ENCODE measurements at regions of chr16 and their contacts with region 1.

Region 1: DNA sequence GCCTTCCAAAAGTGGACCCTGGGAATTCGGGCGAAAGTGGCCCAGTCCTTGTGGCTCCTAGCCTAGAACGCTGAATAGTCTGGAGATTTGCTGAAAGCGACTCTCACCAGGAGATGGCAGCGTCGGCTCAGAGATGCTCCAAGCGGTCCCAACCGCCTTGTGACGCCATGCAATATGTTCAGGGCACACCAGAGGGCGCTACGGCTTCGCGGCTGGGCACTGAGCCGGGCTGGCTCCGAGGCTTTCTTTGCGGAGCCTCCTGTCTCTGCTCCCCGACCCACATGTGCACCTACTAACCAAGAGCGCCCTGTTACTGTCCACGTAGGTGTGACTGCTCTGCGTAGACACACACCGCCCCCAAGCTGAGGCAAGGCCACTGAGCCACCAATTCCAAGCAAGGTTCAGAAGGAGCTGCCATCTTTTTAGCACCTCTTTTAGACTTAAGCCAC is 36.9 kb downstream of the SYCE1L start:
- DNase-seq: peak; percentile 71
- ATAC-seq: peak; percentile 99
- H3K4me3 ChIP-seq: no peak overlapping the region
- H3K27ac ChIP-seq: no peak overlapping the region
- H3K4me1 ChIP-seq: no peaks in the 10 kb centered on the region
- H3K27me3 ChIP-seq: peaks cover 2% of the 10 kb centered on the region; the same call in 1 of the 2 replicates
- CTCF ChIP-seq: peak; percentile 100; the same call in 1 of the 2 replicates
- POLR2A ChIP-seq: peak; percentile 73
- RAD21 ChIP-seq: peak; percentile 100

Region 2: DNA sequence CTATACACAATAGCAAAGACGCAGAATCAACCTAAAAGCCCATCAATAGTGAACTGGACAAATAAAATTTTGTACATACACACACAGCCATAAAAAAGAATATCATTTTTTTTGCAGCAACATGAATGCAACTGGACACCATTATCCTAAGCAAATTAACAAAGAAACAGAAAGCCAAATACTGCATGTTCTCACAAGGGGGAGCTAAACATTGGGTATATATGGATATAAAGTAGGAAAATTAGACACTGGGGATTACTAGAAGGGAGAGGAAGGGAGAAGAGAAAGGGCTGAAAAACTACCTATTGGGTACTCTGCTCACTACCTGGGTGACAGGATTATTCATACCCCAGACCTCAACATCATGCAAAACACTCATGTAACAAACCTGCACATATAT is 170.6 kb after region 1 on chr16:
- CTCF ChIA-PET with region 1: no interaction called
- POLR2A ChIA-PET with region 1: no interaction called
- dilution Hi-C with region 1: no loop called
- in situ Hi-C with region 1: no loop called
- intact Hi-C with region 1: loop called (anchors 1 kb)
- DNase-seq: peak; percentile 1
- ATAC-seq: no peak
- H3K4me3 ChIP-seq: no peak overlapping the region
- H3K27ac ChIP-seq: no peak overlapping the region
- H3K4me1 ChIP-seq: no peaks in the 10 kb centered on the region
- H3K27me3 ChIP-seq: no peaks in the 10 kb centered on the region
- CTCF ChIP-seq: peak; percentile 16; the same call in 1 of the 2 replicates
- POLR2A ChIP-seq: no peak
- RAD21 ChIP-seq: no peak

Region 3: DNA sequence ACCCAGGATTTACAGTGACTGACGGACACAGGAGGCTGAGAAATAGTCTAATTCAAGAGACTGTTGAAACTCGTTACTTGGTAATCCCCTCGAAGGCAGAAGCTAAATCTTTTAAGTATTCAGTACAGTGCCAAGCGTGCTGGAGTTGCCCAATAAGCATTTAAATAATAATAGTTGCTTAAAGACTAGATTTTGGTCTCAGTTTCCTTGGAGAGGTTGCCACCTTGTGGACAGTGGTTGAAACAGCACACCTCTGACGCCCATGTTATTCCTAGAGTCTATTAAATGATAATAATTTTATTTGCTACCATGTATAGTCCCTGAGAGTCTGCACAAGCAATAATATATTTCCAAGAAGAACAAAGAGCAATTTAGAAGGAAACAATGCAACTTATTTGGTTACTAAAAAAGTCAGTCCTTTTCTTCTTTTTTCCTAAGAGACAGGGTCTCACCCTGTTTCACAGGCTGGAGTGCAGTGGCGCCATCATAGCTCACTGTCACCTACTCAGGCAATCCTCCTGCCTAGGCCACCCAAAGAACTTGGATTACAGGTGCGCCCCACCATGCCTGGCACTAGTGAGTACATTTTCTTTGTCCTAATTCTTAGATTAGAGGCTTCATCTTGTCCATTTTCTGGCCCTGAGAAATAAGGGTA is 348.2 kb after region 1 on chr16:
- CTCF ChIA-PET with region 1: interaction called, 43 read pairs
- POLR2A ChIA-PET with region 1: no interaction called
- dilution Hi-C with region 1: loop called (anchors 25 kb)
- in situ Hi-C with region 1: loop called (anchors 5 kb)
- intact Hi-C with region 1: loop called (anchors 1 kb)
- DNase-seq: peak; percentile 63
- ATAC-seq: peak; percentile 83
- H3K4me3 ChIP-seq: no peak overlapping the region
- H3K27ac ChIP-seq: no peak overlapping the region
- H3K4me1 ChIP-seq: no peaks in the 10 kb centered on the region
- H3K27me3 ChIP-seq: peaks cover 7% of the 10 kb centered on the region
- CTCF ChIP-seq: peak; percentile 96
- POLR2A ChIP-seq: no peak
- RAD21 ChIP-seq: peak; percentile 88

Region 4: GRCh38 chr16:77971306-77972271 is 735.5 kb after region 1 on chr16:
- CTCF ChIA-PET with region 1: no interaction called
- POLR2A ChIA-PET with region 1: no interaction called
- dilution Hi-C with region 1: no loop called
- in situ Hi-C with region 1: no loop called
- intact Hi-C with region 1: loop called (anchors 10 kb)
- DNase-seq: peak; percentile 75
- ATAC-seq: peak; percentile 96
- H3K4me3 ChIP-seq: no peak overlapping the region
- H3K27ac ChIP-seq: no peak overlapping the region
- H3K4me1 ChIP-seq: no peaks in the 10 kb centered on the region
- H3K27me3 ChIP-seq: no peaks in the 10 kb centered on the region
- CTCF ChIP-seq: peak; percentile 81
- POLR2A ChIP-seq: peak; percentile 42; the same call in 1 of the 2 replicates
- RAD21 ChIP-seq: peak; percentile 94

Region 5: GRCh38 chr16:78099372-78100161 is 863.5 kb after region 1 on chr16 and contains the start of gene WWOX:
- CTCF ChIA-PET with region 1: no interaction called
- POLR2A ChIA-PET with region 1: no interaction called
- dilution Hi-C with region 1: no loop called
- in situ Hi-C with region 1: no loop called
- intact Hi-C with region 1: loop called (anchors 1 kb)
- DNase-seq: peak; percentile 98
- ATAC-seq: peak; percentile 99
- H3K4me3 ChIP-seq: peak within 1 kb of the TSS; percentile 80
- H3K27ac ChIP-seq: peak within 1 kb of the TSS; percentile 52
- H3K4me1 ChIP-seq: no peaks in the 10 kb centered on the region
- H3K27me3 ChIP-seq: no peaks in the 10 kb centered on the region
- CTCF ChIP-seq: peak; percentile 70
- POLR2A ChIP-seq: no peak
- RAD21 ChIP-seq: no peak
- total RNA-seq, gene WWOX: 5.4 and 8.9 TPM in 2 replicates

Measured in IMR-90 (cell line).